Dorsolateral prefrontal cortex (tissue), 120 donors: ENCODE measurements at regions of chr13 and their contacts with region 1.

Region 1: DNA sequence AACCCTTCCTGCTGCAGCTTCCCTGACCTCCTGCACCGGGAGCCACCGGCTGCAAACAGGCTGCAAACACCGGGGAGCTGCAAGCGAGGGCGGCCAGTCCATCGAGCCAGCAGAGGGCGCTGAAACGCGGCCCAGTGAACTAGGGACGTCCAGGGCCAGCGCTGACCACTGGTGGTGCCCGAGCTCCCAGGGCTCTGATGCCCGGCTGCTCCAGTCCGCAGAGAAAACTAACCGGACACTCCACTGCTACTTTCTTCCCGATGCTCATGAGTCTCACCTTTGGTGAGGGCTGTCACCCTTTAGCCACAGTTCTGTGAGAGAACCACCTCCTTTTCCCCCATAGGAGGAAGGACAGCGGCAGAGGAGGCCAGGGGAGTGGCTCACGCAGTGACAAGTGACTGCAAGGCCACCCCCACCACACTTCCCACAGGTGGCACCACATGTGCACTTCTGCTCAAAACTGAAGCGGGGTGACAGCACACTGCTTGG is 82.8 kb upstream of the MTIF3 start:
- DNase-seq: peak; percentile 66 to 89 (median 80)
- H3K4me3 ChIP-seq: peak overlapping the region in 44 of 59 donors; percentile 2 to 57 (median 37)
- H3K27ac ChIP-seq: no peak overlapping the region
- H3K27me3 ChIP-seq: no peaks in the 10 kb centered on the region
- CTCF ChIP-seq: peak; percentile 51 to 98 (median 89)

Region 2: GRCh38 chr13:27006519-27007161 is 526.6 kb before region 1 on chr13:
- intact Hi-C with region 1: no loop called
- DNase-seq: peak in 9 of 10 donors; percentile 34 to 72 (median 57)
- H3K4me3 ChIP-seq: peak overlapping the region; percentile 36 to 77 (median 60)
- H3K27ac ChIP-seq: peak overlapping the region in 58 of 59 donors; percentile 31 to 96 (median 87)
- H3K27me3 ChIP-seq: peaks cover 0 to 4% (median 0%) of the 10 kb centered on the region in 45 donors
- CTCF ChIP-seq: peak in 3 of 56 donors; percentile 4 to 13 (median 10)

Region 3: DNA sequence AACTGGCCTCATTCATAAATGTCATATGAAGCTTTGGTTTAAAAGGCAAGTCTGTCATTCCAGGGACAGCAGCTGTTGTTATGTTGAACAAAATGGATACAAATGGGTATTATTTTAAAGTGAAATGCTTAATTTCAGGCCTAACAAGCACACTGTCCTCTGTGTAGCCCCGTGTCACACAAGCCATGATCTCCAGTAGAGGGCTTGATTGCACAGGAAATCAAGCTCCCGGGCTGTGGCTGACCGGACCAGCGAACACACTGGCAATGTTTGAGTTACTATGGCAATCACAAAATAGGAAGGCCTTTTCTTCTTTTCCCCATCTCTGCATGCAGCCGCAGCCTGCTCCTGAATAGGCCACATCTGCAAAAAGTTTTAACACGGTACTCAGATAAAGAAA is 195.1 kb after region 1 on chr13:
- intact Hi-C with region 1: loop called in 1 of 2 experiments (anchors 10 kb)
- DNase-seq: peak in 5 of 10 donors; percentile 7 to 52 (median 38)
- H3K4me3 ChIP-seq: no peak overlapping the region
- H3K27ac ChIP-seq: no peak overlapping the region
- H3K27me3 ChIP-seq: peaks cover 0 to 5% (median 0%) of the 10 kb centered on the region in 45 donors
- CTCF ChIP-seq: peak in 46 of 56 donors; percentile 13 to 61 (median 37)

Region 4: GRCh38 chr13:27988520-27988919 is 455.3 kb after region 1 on chr13 and contains the start of gene URAD:
- intact Hi-C with region 1: loop called in 1 of 2 experiments (anchors 5 kb)
- DNase-seq: no peak
- H3K4me3 ChIP-seq: no peak within 1 kb of the TSS
- H3K27ac ChIP-seq: no peak within 1 kb of the TSS
- H3K27me3 ChIP-seq: peaks cover 0 to 46% (median 16%) of the 10 kb centered on the region in 45 donors
- CTCF ChIP-seq: no peak
- total RNA-seq, gene URAD: 0.52 to 0.68 TPM in 2 of 120 experiments, not detected in the others